Activated naive CD4-positive, alpha-beta T cell treated with anti-CD3 and anti-CD28 coated beads for 36 hours (primary cell): ENCODE measurements at regions of chr1 and their contacts with region 1.

Region 1: GRCh38 chr1:89274411-89274857 is 1.8 kb upstream of the GBP5 start:
- DNase-seq: peak; percentile 35
- H3K4me3 Mint-ChIP-seq: peak overlapping the region; percentile 91
- H3K27ac Mint-ChIP-seq: peak overlapping the region; percentile 98
- H3K4me1 Mint-ChIP-seq: peaks cover 57% of the 10 kb centered on the region
- H3K27me3 Mint-ChIP-seq: no peaks in the 10 kb centered on the region

Region 2: DNA sequence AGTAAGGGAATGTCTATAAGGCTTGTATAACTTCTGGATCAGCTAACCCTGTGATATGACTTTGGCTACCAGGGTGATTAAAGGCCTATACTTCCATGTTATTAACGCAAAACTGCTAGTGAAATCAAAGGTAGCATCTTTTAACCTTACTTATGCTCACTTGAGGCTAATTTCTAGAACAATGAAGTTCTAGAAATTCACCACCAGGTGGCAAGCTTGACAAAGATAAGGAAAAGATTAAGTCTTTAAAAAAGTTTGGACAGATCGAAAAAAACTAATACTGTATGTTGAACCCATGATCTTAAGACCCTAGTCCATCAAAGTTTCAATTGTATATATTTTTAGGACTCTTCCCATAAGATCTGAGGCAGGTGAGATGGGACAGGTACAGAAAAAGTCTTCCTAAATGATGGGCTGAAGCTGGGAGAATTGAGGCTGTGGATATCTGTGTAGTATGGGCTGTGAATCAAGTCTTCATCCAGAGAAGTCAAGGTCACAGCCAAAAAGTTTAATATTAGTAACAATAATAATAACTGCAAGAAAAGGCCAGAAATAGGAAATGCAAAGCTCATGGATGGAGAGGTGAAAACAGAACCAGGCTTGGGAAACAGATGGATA is 300.8 kb before region 1 on chr1:
- CTCF ChIA-PET with region 1: no interaction called
- intact Hi-C with region 1: loop called (anchors 1 kb)
- DNase-seq: no peak
- H3K4me3 Mint-ChIP-seq: no peak overlapping the region
- H3K27ac Mint-ChIP-seq: no peak overlapping the region
- H3K4me1 Mint-ChIP-seq: peaks cover 27% of the 10 kb centered on the region
- H3K27me3 Mint-ChIP-seq: no peaks in the 10 kb centered on the region

Region 3: DNA sequence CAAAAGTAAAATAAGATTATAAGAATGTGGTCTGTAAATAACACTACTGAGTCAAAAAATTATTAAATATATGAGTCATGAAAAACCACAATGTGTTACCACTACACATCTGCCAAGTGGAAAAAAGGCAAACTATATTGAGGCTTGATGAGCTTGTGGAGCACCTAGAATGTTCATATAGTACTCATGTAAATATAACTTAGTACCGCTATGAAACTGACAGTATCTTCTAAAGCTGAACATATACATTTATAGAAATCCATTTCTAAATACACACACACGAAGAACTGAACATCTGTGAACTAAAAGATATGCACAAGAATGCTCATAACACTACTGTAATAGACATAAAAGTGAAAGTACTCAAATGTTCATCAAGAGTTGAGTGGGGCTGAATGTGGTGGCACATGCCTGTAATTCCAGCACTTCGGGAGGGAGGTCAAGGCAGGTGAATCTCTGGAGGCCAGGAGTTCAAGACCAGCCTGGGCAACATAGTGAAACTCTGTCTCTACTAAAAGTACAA is 233.3 kb before region 1 on chr1:
- CTCF ChIA-PET with region 1: no interaction called
- intact Hi-C with region 1: loop called (anchors 1 kb)
- DNase-seq: peak; percentile 63
- H3K4me3 Mint-ChIP-seq: peak overlapping the region; percentile 25
- H3K27ac Mint-ChIP-seq: peak overlapping the region; percentile 72
- H3K4me1 Mint-ChIP-seq: peaks cover 33% of the 10 kb centered on the region
- H3K27me3 Mint-ChIP-seq: peaks cover 11% of the 10 kb centered on the region

Region 4: DNA sequence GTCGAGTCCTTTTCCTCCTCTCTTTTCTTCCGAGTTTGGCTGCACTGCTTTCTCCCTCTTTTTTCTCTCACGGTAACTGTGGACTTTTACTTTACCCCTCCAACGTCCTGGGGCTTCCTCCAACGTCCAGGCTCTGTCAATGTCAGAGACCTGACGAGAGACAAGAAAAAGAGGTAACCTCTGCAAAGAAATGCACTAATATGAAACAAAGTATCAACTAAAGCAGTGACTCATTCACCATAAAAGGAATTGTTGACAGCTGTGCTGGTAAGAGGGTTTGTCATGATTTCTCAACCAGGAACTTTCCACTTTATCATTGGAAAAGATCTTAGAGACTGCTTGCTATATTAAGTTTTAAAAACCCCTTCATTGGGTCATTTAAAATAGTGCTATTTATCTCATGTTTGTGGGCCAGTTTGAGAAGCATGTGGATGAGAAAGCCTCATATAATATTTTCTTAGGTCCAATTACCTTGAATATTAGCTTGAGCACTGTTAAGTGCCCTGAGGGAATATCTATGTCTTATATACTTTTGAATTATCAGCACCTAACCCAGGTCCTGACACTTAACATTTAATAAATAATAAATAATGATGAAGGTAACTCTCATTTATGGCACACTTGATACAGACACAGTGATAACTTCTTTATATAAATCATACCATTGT is 148.4 kb before region 1 on chr1 and contains the start of gene GBP2:
- CTCF ChIA-PET with region 1: interaction called, 16 read pairs
- intact Hi-C with region 1: loop called (anchors 1 kb)
- DNase-seq: peak; percentile 44
- H3K4me3 Mint-ChIP-seq: peak within 1 kb of the TSS; percentile 91
- H3K27ac Mint-ChIP-seq: peak within 1 kb of the TSS; percentile 96
- H3K4me1 Mint-ChIP-seq: peaks cover 44% of the 10 kb centered on the region
- H3K27me3 Mint-ChIP-seq: no peaks in the 10 kb centered on the region
- total RNA-seq, gene GBP2: 338 to 351 TPM

Region 5: DNA sequence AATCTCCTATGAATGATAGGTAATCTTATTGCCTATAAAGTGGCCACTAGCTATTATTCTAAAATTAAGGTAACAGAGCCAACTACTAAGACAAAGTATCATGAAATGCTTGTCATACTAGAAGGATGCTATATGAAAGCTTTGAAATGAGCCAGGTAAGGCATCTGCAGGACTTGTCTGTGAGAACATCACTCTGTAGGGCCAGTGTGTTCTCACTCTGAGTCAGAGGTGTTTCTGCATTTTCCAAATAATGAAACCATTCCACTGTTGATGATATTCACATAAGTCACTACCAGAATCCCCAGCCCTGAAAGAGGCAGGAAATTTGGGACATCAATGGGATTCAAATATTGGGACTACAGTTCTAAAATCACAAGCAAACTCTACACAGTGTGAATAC is 24.0 kb after region 1 on chr1:
- CTCF ChIA-PET with region 1: interaction called, 14 read pairs
- intact Hi-C with region 1: loop called (anchors 1 kb)
- DNase-seq: no peak
- H3K4me3 Mint-ChIP-seq: no peak overlapping the region
- H3K27ac Mint-ChIP-seq: no peak overlapping the region
- H3K4me1 Mint-ChIP-seq: peaks cover 55% of the 10 kb centered on the region
- H3K27me3 Mint-ChIP-seq: no peaks in the 10 kb centered on the region

Region 6: DNA sequence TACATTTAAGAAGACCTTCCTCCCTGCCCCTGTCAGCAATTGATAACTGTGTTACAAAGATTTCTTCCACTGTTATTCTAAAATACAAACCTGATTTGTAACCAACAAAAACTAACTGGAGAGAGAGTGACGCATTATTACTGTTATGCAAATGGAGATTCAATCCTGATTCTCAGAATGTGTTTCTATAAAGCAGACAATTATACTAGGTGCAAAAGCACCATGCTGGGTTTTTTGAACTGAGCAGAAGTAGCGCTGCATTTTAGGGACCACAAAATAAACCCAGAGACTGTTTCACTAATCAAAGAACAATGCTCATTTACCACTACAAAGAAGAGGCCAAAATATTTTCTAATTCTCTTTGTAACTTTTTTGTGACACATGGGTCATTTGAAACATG is 75.9 kb after region 1 on chr1:
- CTCF ChIA-PET with region 1: no interaction called
- intact Hi-C with region 1: no loop called
- DNase-seq: no peak
- H3K4me3 Mint-ChIP-seq: no peak overlapping the region
- H3K27ac Mint-ChIP-seq: no peak overlapping the region
- H3K4me1 Mint-ChIP-seq: peaks cover 10% of the 10 kb centered on the region
- H3K27me3 Mint-ChIP-seq: no peaks in the 10 kb centered on the region

Region 7: GRCh38 chr1:89524369-89525168 is 250.1 kb after region 1 on chr1 and contains the start of gene LRRC8B:
- CTCF ChIA-PET with region 1: no interaction called
- intact Hi-C with region 1: loop called (anchors 5 kb)
- DNase-seq: peak; percentile 93
- H3K4me3 Mint-ChIP-seq: no peak within 1 kb of the TSS
- H3K27ac Mint-ChIP-seq: no peak within 1 kb of the TSS
- H3K4me1 Mint-ChIP-seq: peaks cover 34% of the 10 kb centered on the region
- H3K27me3 Mint-ChIP-seq: no peaks in the 10 kb centered on the region
- total RNA-seq, gene LRRC8B: 18.0 to 20.4 TPM